A549 (cell line): ENCODE measurements at regions of chr5 and their contacts with region 1.

Region 1: DNA sequence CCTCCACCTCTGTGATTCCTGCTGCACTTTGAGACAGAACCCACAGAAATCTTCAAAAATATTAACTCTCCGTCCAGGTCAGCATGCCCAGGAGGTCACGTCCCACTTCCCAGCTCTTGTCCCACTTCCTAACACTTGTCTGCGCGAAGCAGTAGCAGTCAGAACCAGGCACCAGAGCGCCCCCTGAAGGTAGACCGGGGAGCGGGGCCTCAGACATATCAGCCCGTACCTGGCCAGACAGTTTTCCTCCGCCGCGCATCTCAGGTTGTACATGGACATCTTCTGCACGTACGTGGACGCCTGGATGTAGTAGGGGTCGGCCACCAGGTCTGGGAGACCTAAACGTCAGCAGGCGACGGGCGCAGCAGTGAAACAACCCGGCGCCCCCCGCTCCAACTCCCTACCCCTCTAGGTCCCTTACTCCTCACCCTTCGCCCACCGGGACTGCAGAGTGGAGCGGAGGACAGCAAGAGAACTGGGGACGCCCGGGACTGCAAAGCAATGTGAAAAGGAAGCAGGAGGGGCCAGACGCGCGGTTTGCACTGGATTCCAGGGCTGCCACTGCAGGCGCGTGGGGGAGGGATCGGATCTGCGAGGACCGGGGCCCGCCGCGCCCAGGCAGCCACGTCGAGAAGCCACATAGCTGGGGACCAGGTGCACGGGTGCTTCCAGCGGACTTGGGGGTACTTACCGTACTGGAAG is 1.2 kb downstream of the LOX start:
- DNase-seq: peak; percentile 51 to 73
- ATAC-seq: peak; percentile 84 to 92
- H3K4me3 ChIP-seq: peak overlapping the region; percentile 55
- H3K27ac ChIP-seq: peak overlapping the region; percentile 12 to 33; a peak in 5 of 6 replicates
- H3K4me1 ChIP-seq: peaks cover 11% of the 10 kb centered on the region; the same call in 1 of the 3 replicates
- CTCF ChIP-seq: peak; percentile 64
- EP300 ChIP-seq: no peak
- POLR2A ChIP-seq: no peak
- RAD21 ChIP-seq: peak; percentile 53 to 61

Region 2: DNA sequence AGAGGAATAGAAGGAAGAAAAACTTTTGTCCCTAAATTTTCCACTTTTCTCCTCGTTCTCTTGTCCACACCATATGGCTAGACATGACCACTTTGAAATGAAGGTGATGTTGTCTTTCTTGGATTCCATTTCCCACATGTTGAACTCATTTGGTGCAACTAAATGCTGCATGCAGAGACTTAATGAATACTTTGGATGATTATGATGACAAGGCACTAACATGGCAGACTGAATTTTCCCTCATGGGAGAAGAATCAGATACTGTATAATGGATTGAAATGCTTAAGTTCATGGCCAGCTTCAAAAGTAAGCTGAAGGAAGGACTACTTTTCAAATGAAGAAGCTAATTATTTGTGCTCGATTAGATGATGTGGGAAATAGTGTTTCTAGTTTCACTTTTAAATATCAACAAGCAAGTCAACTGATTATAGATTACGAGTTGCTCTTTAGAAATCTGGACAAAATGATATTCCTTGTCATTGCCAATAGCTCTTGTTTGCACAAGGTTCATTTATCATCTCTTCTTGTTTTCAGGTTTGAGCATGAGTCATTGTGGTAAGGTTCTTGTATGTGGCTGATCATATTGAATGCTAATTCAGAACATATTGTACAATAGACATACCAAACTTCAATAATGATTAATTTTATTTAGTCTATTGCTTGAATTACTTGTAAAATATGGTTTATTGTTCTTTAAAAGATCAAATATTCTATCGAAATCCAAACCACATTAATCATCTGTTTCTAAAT is 726.5 kb before region 1 on chr5:
- CTCF ChIA-PET with region 1: no interaction called
- POLR2A ChIA-PET with region 1: no interaction called
- DNase-seq: no peak
- ATAC-seq: no peak
- H3K4me3 ChIP-seq: no peak overlapping the region
- H3K27ac ChIP-seq: no peak overlapping the region
- H3K4me1 ChIP-seq: peaks cover 4% of the 10 kb centered on the region; the same call in 1 of the 3 replicates
- CTCF ChIP-seq: no peak
- EP300 ChIP-seq: no peak
- POLR2A ChIP-seq: no peak
- RAD21 ChIP-seq: no peak

Region 3: GRCh38 chr5:121819682-121820261 is 257.0 kb before region 1 on chr5:
- CTCF ChIA-PET with region 1: no interaction called
- POLR2A ChIA-PET with region 1: no interaction called
- DNase-seq: no peak
- ATAC-seq: no peak
- H3K4me3 ChIP-seq: no peak overlapping the region
- H3K27ac ChIP-seq: no peak overlapping the region
- H3K4me1 ChIP-seq: no peaks in the 10 kb centered on the region
- CTCF ChIP-seq: no peak
- EP300 ChIP-seq: no peak
- POLR2A ChIP-seq: no peak
- RAD21 ChIP-seq: no peak

Region 4: GRCh38 chr5:122063836-122064235 is 13.0 kb before region 1 on chr5:
- CTCF ChIA-PET with region 1: interaction called, 28 read pairs
- POLR2A ChIA-PET with region 1: no interaction called
- DNase-seq: no peak
- ATAC-seq: no peak
- H3K4me3 ChIP-seq: no peak overlapping the region
- H3K27ac ChIP-seq: no peak overlapping the region
- H3K4me1 ChIP-seq: peaks cover 17% of the 10 kb centered on the region; the same call in 2 of the 3 replicates
- CTCF ChIP-seq: no peak
- EP300 ChIP-seq: no peak
- POLR2A ChIP-seq: no peak
- RAD21 ChIP-seq: no peak

Region 5: DNA sequence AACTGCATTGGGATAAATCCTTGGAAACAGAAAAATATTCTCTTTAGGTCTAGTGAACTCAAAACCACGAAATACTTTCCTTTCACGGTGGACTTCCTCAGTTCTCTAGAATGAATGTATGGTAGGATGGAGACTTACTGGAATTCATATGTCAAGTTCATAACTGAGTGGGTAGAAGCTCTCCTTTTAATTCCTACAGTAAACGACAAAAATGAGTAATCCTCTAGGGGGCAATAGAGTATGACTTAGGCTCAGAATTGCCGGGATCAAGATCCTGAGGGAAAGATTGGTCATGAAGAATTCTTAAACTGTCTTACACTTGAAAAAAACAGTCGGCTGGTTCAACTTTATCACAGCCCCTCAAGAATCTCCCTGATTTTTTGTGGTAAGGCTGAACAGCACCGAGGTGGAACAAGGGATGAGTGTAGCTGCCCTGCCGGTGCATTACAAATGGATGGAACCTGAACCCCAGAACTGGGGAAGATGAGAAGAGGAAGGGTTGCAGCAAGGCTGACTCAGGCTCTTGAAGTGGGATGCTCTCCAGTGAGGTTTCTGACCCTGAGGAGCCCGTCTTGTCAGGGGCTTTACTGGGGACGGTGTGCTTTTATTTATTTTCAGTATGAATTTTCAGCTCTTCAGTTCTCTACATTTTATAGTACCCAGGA is 15.3 kb after region 1 on chr5:
- CTCF ChIA-PET with region 1: interaction called, 36 read pairs
- POLR2A ChIA-PET with region 1: no interaction called
- DNase-seq: peak in 1 of 2 experiments; percentile 20
- ATAC-seq: peak; percentile 54 to 79; a peak in 3 of 6 replicates
- H3K4me3 ChIP-seq: no peak overlapping the region
- H3K27ac ChIP-seq: no peak overlapping the region
- H3K4me1 ChIP-seq: no peaks in the 10 kb centered on the region
- CTCF ChIP-seq: peak; percentile 47
- EP300 ChIP-seq: no peak
- POLR2A ChIP-seq: no peak
- RAD21 ChIP-seq: peak; percentile 42 to 49; a peak in 3 of 5 replicates

Region 6: DNA sequence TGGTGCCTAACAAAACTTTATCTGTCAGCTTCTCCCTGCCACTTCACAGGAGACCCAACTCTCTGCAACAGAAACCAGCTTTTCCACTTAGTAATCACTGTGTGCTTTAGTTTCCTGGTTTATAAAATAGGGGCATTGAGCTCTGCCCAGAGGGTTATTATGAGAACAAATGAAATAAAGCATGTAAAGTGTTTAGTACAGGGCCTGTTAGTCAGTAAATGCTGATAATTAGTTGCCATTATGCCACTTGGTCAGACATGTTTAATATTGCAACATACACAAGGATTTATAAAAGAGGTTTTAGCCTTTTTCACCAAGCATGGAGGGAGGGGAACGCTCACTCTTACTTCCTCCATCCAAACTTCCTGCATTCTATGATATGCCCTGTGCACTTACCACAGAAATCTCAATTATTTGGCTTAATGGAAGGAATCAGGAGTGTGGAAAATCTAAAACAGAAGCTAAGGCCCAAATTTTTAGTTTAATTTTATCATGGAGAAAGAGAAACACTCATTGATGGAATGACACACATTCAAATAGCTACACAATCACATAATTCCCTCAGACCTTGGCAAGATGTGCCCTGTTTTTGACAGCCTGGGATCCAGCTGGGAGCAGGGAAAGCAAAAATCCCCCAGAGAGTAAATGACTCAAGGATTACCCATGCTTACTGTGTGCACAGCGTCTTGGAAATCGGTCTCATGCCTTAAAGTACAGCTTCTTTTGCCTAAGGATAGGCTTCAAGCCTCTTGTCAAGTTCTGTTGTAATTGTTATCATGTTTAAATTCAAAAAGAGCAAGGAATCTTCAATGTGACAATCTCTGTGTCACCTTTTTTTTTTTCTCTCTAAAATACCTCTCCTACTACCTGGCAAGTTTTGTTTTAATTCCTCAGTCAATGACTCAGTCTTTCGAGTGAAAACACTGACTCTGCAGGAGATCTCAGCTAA is 86.6 kb after region 1 on chr5:
- CTCF ChIA-PET with region 1: no interaction called
- POLR2A ChIA-PET with region 1: no interaction called
- DNase-seq: peak; percentile 32 to 49
- ATAC-seq: peak; percentile 81 to 86
- H3K4me3 ChIP-seq: no peak overlapping the region
- H3K27ac ChIP-seq: peak overlapping the region; percentile 69 to 89; a peak in 5 of 6 replicates
- H3K4me1 ChIP-seq: peaks cover 40% of the 10 kb centered on the region
- CTCF ChIP-seq: no peak
- EP300 ChIP-seq: peak in 1 of 2 experiments; percentile 23; a peak in 1 of 5 replicates
- POLR2A ChIP-seq: no peak
- RAD21 ChIP-seq: no peak